ENCODE measurements at regions of chr5 and their contacts with region 1.

Region 1: GRCh38 chr5:148374692-148375360 is 8.9 kb upstream of the FBXO38 start:
- DNase-seq: peak; percentile 29
- H3K4me3 ChIP-seq: no peak overlapping the region
- H3K27ac ChIP-seq: no peak overlapping the region
- H3K4me1 ChIP-seq: peaks cover 0 to 12% (median 4%) of the 10 kb centered on the region in 4 donors
- H3K27me3 ChIP-seq: no peaks in the 10 kb centered on the region
- CTCF ChIP-seq: peak; percentile 56 to 71 (median 69)
- EP300 ChIP-seq: no peak
- POLR2A ChIP-seq: no peak

Region 2: GRCh38 chr5:148179234-148179824 is 195.5 kb before region 1 on chr5:
- in situ Hi-C with region 1: loop called (anchors 10 to 25 kb)
- intact Hi-C with region 1: loop called (anchors 10 kb)
- DNase-seq: no peak
- H3K4me3 ChIP-seq: no peak overlapping the region
- H3K27ac ChIP-seq: no peak overlapping the region
- H3K4me1 ChIP-seq: no peaks in the 10 kb centered on the region
- H3K27me3 ChIP-seq: no peaks in the 10 kb centered on the region
- CTCF ChIP-seq: peak; percentile 57 to 72 (median 63)
- EP300 ChIP-seq: no peak
- POLR2A ChIP-seq: no peak

Region 3: DNA sequence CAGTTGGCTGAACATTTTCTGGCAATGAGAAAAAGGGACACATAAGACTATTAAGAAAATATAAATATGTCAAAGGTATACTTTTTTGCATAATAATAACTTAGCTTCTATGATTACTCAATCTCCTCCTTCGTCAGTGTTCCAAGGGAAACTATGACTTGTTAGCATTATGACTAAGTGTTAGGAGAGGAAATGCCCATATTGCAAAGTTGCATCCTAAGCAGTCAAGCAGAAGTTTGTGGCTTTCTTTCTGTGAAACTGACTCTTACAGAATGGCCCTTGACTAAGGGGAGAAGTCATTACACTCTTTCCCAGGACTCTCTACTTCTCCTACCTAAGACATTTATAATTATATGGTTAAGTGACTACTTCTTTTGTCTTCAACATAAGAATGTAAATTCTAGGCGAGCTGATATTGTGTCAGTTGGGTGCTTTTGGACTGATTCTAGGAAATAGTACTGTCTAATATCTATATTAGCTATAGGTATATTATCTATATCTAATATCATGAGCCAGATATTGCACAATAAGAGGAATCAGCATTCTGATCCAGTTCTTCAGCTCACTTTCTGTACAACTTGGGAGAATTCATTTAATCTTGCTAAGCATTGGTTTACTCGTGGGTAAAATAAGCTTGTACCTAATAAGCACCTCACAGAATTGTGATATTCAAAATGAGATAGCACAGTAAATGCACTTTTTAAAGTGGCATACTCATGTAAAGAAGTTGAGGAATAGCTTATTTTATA is 188.4 kb before region 1 on chr5:
- in situ Hi-C with region 1: loop called (anchors 10 to 25 kb)
- intact Hi-C with region 1: no loop called
- DNase-seq: no peak
- H3K4me3 ChIP-seq: no peak overlapping the region
- H3K27ac ChIP-seq: no peak overlapping the region
- H3K4me1 ChIP-seq: no peaks in the 10 kb centered on the region
- H3K27me3 ChIP-seq: no peaks in the 10 kb centered on the region
- CTCF ChIP-seq: no peak
- EP300 ChIP-seq: no peak
- POLR2A ChIP-seq: no peak

Region 4: GRCh38 chr5:148224131-148224742 is 150.6 kb before region 1 on chr5:
- in situ Hi-C with region 1: no loop called
- intact Hi-C with region 1: no loop called
- DNase-seq: no peak
- H3K4me3 ChIP-seq: no peak overlapping the region
- H3K27ac ChIP-seq: no peak overlapping the region
- H3K4me1 ChIP-seq: no peaks in the 10 kb centered on the region
- H3K27me3 ChIP-seq: no peaks in the 10 kb centered on the region
- CTCF ChIP-seq: no peak
- EP300 ChIP-seq: peak; percentile 37
- POLR2A ChIP-seq: no peak

Region 5: GRCh38 chr5:148314204-148314603 is 60.6 kb before region 1 on chr5:
- in situ Hi-C with region 1: no loop called
- intact Hi-C with region 1: no loop called
- DNase-seq: no peak
- H3K4me3 ChIP-seq: no peak overlapping the region
- H3K27ac ChIP-seq: no peak overlapping the region
- H3K4me1 ChIP-seq: no peaks in the 10 kb centered on the region
- H3K27me3 ChIP-seq: no peaks in the 10 kb centered on the region
- CTCF ChIP-seq: no peak
- EP300 ChIP-seq: no peak
- POLR2A ChIP-seq: no peak

Measured in transverse colon (tissue), 4 donors.